ENCODE measurements at regions of chr7 and their contacts with region 1.

Region 1: DNA sequence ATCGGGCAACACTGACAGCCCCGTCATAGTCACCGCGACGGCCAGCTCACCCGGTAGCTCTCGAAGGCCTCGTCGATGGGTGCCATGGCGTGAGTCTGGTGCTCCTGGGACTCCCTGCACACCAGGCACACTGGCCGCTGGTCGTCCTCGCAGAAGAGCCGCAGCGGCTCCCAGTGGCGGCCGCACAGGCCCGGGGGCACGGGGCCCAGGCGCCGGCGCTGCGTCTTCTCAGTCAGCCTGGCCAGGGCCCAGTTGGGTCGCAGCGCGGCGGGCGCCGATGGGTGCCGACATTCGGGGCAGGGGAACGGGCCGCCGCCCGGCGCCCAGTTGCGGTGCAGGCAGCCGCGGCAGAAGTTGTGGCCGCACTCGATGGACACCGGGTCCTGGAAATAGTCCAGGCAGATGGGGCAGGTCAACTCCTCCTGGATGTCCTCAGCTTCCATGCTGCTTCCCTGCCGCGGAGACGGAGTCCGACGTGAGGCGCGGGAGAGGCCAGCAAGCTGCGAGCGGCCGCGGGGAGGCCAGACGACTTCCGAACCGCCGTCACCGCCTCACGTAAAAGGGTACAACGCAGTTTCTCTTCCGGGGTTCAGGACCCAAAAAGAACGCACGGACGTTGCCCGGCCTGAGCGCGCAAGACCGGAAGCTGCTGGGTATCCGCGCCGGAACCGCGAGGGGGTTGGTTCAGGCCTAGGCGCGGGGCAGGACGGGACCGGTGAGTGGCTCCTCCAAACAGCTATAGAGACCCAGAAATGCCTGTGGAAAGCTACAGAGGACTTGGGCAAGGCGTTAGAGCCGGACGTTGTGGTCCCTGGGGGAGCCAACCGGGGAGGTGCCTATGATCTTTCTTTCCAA is at the start of gene TRIM4:
- DNase-seq: peak; percentile 76 to 92 (median 89)
- ATAC-seq: peak; percentile 98
- H3K4me3 ChIP-seq: peak within 1 kb of the TSS; percentile 68
- H3K4me3 Mint-ChIP-seq: peak within 1 kb of the TSS; percentile 87 to 98 (median 96)
- H3K27ac ChIP-seq: peak within 1 kb of the TSS; percentile 96
- H3K27ac Mint-ChIP-seq: peak within 1 kb of the TSS; percentile 96 to 99 (median 98)
- H3K4me1 ChIP-seq: peaks cover 36 to 37% of the 10 kb centered on the region in 2 donors
- H3K4me1 Mint-ChIP-seq: peaks cover 28 to 65% (median 54%) of the 10 kb centered on the region in 7 donors
- H3K27me3 ChIP-seq: no peaks in the 10 kb centered on the region
- H3K27me3 Mint-ChIP-seq: peaks cover 0 to 2% (median 0%) of the 10 kb centered on the region in 5 donors
- total RNA-seq, gene TRIM4: 30.1 to 75.0 (median 37.6) TPM

Region 2: GRCh38 chr7:99975782-99976521 is 56.8 kb after region 1 on chr7 and contains the start of gene AZGP1:
- CTCF ChIA-PET with region 1: interaction called, 12 read pairs
- POLR2A ChIA-PET with region 1: interaction called, 3 read pairs
- intact Hi-C with region 1: no loop called
- DNase-seq: no peak
- ATAC-seq: no peak
- H3K4me3 ChIP-seq: no peak within 1 kb of the TSS
- H3K4me3 Mint-ChIP-seq: no peak within 1 kb of the TSS
- H3K27ac ChIP-seq: no peak within 1 kb of the TSS
- H3K27ac Mint-ChIP-seq: no peak within 1 kb of the TSS
- H3K4me1 ChIP-seq: no peaks in the 10 kb centered on the region
- H3K4me1 Mint-ChIP-seq: peaks cover 0 to 12% (median 5%) of the 10 kb centered on the region in 7 donors
- H3K27me3 ChIP-seq: no peaks in the 10 kb centered on the region
- H3K27me3 Mint-ChIP-seq: peaks cover 0 to 22% (median 3%) of the 10 kb centered on the region in 5 donors
- total RNA-seq, gene AZGP1: not detected

Region 3: DNA sequence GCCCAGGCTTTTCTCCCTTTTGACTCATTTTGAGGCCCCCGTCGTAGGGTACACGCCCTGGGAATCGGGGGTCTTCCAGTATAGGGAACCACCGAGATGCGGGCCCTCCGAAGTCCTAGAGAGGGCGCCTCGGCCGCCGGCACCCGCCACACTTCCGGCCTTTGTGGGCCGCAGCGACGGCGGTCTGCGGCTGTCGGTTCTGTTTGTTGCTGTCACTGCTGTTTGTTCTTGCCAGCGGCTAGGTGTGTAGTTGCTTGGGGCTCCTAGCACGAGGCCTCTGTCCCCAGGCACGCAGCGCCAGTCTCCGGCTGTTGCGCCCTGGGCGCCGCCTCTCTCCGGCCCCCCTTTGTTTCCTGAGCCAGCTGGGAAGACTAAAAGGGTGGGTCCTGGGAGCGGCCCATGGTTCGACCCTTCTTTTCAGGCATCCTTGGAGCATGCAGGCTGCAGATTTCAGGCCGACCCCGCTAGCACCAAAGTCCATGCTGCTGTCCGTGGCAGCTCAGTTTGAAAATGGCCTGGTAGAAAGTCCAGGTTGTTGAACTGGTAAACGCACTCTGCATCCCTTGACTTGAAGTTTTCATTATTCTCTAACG is 78.5 kb after region 1 on chr7:
- CTCF ChIA-PET with region 1: interaction called, 102 read pairs
- POLR2A ChIA-PET with region 1: interaction called, 26 read pairs
- intact Hi-C with region 1: no loop called
- DNase-seq: peak; percentile 55 to 76 (median 72)
- ATAC-seq: peak; percentile 96
- H3K4me3 ChIP-seq: peak overlapping the region; percentile 43
- H3K4me3 Mint-ChIP-seq: peak overlapping the region; percentile 71 to 85 (median 76)
- H3K27ac ChIP-seq: peak overlapping the region; percentile 71
- H3K27ac Mint-ChIP-seq: peak overlapping the region; percentile 57 to 95 (median 87)
- H3K4me1 ChIP-seq: peaks cover 7 to 11% of the 10 kb centered on the region in 2 donors
- H3K4me1 Mint-ChIP-seq: peaks cover 7 to 21% (median 18%) of the 10 kb centered on the region in 7 donors
- H3K27me3 ChIP-seq: no peaks in the 10 kb centered on the region
- H3K27me3 Mint-ChIP-seq: peaks cover 0 to 3% (median 0%) of the 10 kb centered on the region in 5 donors

Region 4: DNA sequence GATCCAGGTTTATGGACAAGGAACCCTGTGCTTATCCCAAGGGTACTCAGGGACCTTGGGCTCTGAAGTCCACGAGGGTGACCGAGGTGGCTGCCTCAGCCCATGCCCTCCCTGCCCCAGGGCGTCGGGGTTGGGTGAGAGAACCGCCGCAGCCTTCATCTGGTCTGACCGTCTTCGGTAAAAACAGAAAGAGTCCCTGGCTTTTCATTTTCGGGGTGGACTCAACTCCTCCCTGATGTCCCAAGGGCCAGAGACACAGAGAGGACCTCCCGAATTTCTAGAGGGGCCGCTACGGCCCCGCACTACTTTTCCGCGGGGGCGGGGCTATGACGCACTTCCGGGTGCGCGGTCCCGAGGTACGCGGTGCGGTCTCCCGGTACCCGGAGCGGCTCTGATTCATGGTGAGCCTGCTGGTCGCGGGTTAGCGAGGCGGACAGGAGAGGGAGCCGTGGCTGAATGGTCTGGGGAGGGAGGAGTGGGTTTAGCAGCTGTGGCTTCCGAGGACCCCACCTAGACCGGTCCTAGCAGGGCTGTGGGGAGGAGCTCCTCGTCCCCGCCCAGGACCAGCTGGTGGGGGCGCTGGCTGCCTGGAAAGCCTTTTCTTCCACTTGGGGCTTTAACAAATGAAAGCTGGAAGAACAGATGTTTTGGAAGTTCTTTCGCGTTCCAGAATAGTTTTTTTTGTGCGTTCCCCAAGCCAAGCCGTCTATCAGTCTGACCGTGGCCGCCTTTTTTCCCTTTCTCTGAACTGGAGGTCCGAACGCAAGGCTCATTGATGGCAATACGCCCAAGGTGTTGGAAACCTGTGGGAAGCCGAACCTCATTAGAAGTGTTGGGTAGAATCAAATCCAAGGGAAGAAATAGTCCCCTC is 130.5 kb after region 1 on chr7 and contains the start of gene ZSCAN21:
- CTCF ChIA-PET with region 1: no interaction called
- POLR2A ChIA-PET with region 1: interaction called, 5 read pairs
- intact Hi-C with region 1: loop called (anchors 1 to 5 kb)
- DNase-seq: peak; percentile 70 to 89 (median 78)
- ATAC-seq: peak; percentile 94
- H3K4me3 ChIP-seq: peak within 1 kb of the TSS; percentile 92
- H3K4me3 Mint-ChIP-seq: peak within 1 kb of the TSS; percentile 86 to 95 (median 92)
- H3K27ac ChIP-seq: peak within 1 kb of the TSS; percentile 95
- H3K27ac Mint-ChIP-seq: peak within 1 kb of the TSS; percentile 81 to 98 (median 97)
- H3K4me1 ChIP-seq: peaks cover 0 to 6% of the 10 kb centered on the region in 2 donors
- H3K4me1 Mint-ChIP-seq: peaks cover 4 to 29% (median 25%) of the 10 kb centered on the region in 7 donors
- H3K27me3 ChIP-seq: no peaks in the 10 kb centered on the region
- H3K27me3 Mint-ChIP-seq: peaks cover 0 to 3% (median 0%) of the 10 kb centered on the region in 5 donors
- total RNA-seq, gene ZSCAN21: 3.9 to 10.1 (median 6.2) TPM

Region 5: GRCh38 chr7:100126931-100127865 is 208.0 kb after region 1 on chr7 and contains the start of gene MBLAC1:
- CTCF ChIA-PET with region 1: interaction called, 8 read pairs
- POLR2A ChIA-PET with region 1: interaction called, 16 read pairs
- intact Hi-C with region 1: no loop called
- DNase-seq: peak; percentile 80 to 95 (median 91)
- ATAC-seq: peak; percentile 95
- H3K4me3 ChIP-seq: peak within 1 kb of the TSS; percentile 99
- H3K4me3 Mint-ChIP-seq: peak within 1 kb of the TSS; percentile 95 to 100 (median 98)
- H3K27ac ChIP-seq: peak within 1 kb of the TSS; percentile 98
- H3K27ac Mint-ChIP-seq: peak within 1 kb of the TSS; percentile 98 to 100 (median 99)
- H3K4me1 ChIP-seq: peaks cover 20 to 25% of the 10 kb centered on the region in 2 donors
- H3K4me1 Mint-ChIP-seq: peaks cover 13 to 46% (median 26%) of the 10 kb centered on the region in 7 donors
- H3K27me3 ChIP-seq: no peaks in the 10 kb centered on the region
- H3K27me3 Mint-ChIP-seq: no peaks in the 10 kb centered on the region
- total RNA-seq, gene MBLAC1: 4.5 to 6.3 (median 5.8) TPM

Region 6: DNA sequence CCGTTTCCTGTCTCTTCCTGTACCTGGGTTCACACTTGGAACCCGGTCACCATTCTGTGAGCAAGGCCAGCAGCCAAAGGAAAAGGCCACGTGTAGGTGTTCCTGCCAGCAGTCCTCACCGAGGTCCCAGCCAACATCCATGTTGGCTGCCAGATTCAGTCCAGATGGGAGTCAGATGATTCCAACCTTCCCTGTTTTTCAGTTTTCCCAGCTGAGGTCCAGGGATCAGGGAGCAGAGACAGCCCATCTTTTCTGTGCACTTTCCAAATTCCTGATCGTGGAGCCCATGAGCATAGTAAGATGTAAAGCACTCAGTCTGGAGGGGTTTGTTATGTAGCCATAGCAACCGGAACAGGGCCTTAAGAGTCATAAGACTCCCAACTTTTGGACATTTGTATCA is 296.7 kb after region 1 on chr7:
- CTCF ChIA-PET with region 1: no interaction called
- POLR2A ChIA-PET with region 1: no interaction called
- intact Hi-C with region 1: loop called (anchors 2 to 10 kb)
- DNase-seq: no peak
- ATAC-seq: no peak
- H3K4me3 ChIP-seq: no peak overlapping the region
- H3K4me3 Mint-ChIP-seq: no peak overlapping the region
- H3K27ac ChIP-seq: no peak overlapping the region
- H3K27ac Mint-ChIP-seq: peak overlapping the region in 7 of 9 donors; percentile 19 to 98 (median 62)
- H3K4me1 ChIP-seq: peaks cover 27 to 35% of the 10 kb centered on the region in 2 donors
- H3K4me1 Mint-ChIP-seq: peaks cover 22 to 71% (median 65%) of the 10 kb centered on the region in 7 donors
- H3K27me3 ChIP-seq: no peaks in the 10 kb centered on the region
- H3K27me3 Mint-ChIP-seq: no peaks in the 10 kb centered on the region

Measured in naive thymus-derived CD4-positive, alpha-beta T cell (primary cell).